K562 (cell line): ENCODE measurements at regions of chr15 and their contacts with region 1.

Region 1: GRCh38 chr15:65318870-65319356 is 14.4 kb downstream of the RNU5B-1 start:
- DNase-seq: peak; percentile 84 to 91 (median 88)
- ATAC-seq: peak; percentile 98
- H3K4me3 ChIP-seq: no peak overlapping the region
- H3K27ac ChIP-seq: no peak overlapping the region
- H3K4me1 ChIP-seq: peaks cover 0 to 4% of the 10 kb centered on the region in 2 experiments; a peak in 2 of 5 replicates
- H3K27me3 ChIP-seq: peaks cover 25 to 48% of the 10 kb centered on the region in 2 experiments
- CTCF ChIP-seq: peak; percentile 90 to 98 (median 98)
- EP300 ChIP-seq: no peak
- POLR2A ChIP-seq: no peak
- RAD21 ChIP-seq: peak; percentile 97 to 98

Region 2: GRCh38 chr15:64841258-64842095 is 477.4 kb before region 1 on chr15 and contains the start of gene PLEKHO2:
- CTCF ChIA-PET with region 1: no interaction called
- POLR2A ChIA-PET with region 1: no interaction called
- in situ Hi-C with region 1: no loop called
- intact Hi-C with region 1: no loop called
- DNase-seq: peak; percentile 95 to 97 (median 96)
- ATAC-seq: peak; percentile 91
- H3K4me3 ChIP-seq: peak within 1 kb of the TSS; percentile 83
- H3K27ac ChIP-seq: peak within 1 kb of the TSS; percentile 81
- H3K4me1 ChIP-seq: peaks cover 34 to 39% of the 10 kb centered on the region in 2 experiments
- H3K27me3 ChIP-seq: no peaks in the 10 kb centered on the region
- CTCF ChIP-seq: peak; percentile 16 to 39 (median 16); a peak in 3 of 6 replicates
- EP300 ChIP-seq: no peak
- POLR2A ChIP-seq: peak; percentile 79
- RAD21 ChIP-seq: no peak
- polyA plus RNA-seq, gene PLEKHO2: 0.24 to 0.53 TPM

Region 3: DNA sequence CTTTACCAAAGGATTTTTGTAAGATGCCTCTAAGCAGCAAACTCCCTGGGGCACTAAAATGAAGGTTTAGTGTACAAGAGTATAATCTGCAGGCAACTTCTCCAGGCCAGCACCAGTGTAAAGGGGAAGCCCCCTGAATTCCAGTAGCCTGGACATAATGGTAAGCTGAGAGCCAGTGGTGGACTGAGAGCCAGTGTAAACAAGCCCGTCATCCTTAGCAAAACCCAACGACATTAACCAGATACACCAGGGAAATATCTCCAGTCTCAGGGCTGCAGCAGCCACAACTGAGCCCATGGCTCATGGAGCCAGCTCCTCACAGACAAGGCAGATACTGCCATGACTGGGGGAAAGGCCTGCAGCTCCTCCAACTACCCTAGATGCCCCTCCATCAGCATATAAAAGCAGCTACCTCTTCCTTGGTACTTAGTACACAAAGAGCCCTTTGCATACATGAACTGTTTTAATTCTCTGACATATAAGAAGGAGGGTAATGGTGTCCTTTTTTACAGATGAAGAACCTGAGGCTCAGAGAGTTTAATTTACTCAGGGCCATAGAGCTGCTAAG is 54.0 kb before region 1 on chr15:
- CTCF ChIA-PET with region 1: no interaction called
- POLR2A ChIA-PET with region 1: no interaction called
- in situ Hi-C with region 1: no loop called
- intact Hi-C with region 1: no loop called
- DNase-seq: no peak
- ATAC-seq: no peak
- H3K4me3 ChIP-seq: no peak overlapping the region
- H3K27ac ChIP-seq: no peak overlapping the region
- H3K4me1 ChIP-seq: no peaks in the 10 kb centered on the region; a peak in 1 of 5 replicates
- H3K27me3 ChIP-seq: no peaks in the 10 kb centered on the region
- CTCF ChIP-seq: no peak
- EP300 ChIP-seq: no peak
- POLR2A ChIP-seq: no peak
- RAD21 ChIP-seq: no peak

Region 4: GRCh38 chr15:65384895-65385858 is 66.3 kb after region 1 on chr15:
- CTCF ChIA-PET with region 1: interaction called, 66 read pairs
- POLR2A ChIA-PET with region 1: interaction called, 3 read pairs
- in situ Hi-C with region 1: loop called (anchors 5 kb)
- intact Hi-C with region 1: loop called (anchors 1 kb)
- DNase-seq: peak; percentile 88 to 91 (median 90)
- ATAC-seq: peak; percentile 96
- H3K4me3 ChIP-seq: peak overlapping the region; percentile 20; the same call in 1 of the 2 replicates
- H3K27ac ChIP-seq: no peak overlapping the region
- H3K4me1 ChIP-seq: peaks cover 6 to 15% of the 10 kb centered on the region in 2 experiments; a peak in 4 of 5 replicates
- H3K27me3 ChIP-seq: peaks cover 48 to 66% of the 10 kb centered on the region in 2 experiments; a peak in 4 of 5 replicates
- CTCF ChIP-seq: peak; percentile 93 to 97 (median 96)
- EP300 ChIP-seq: no peak
- POLR2A ChIP-seq: no peak
- RAD21 ChIP-seq: peak; percentile 86 to 96

Region 5: GRCh38 chr15:65400760-65401610 is 82.1 kb after region 1 on chr15:
- CTCF ChIA-PET with region 1: interaction called, 16 read pairs
- POLR2A ChIA-PET with region 1: no interaction called
- in situ Hi-C with region 1: no loop called
- intact Hi-C with region 1: loop called (anchors 5 kb)
- DNase-seq: peak; percentile 78 to 90 (median 86)
- ATAC-seq: peak; percentile 96
- H3K4me3 ChIP-seq: no peak overlapping the region
- H3K27ac ChIP-seq: no peak overlapping the region
- H3K4me1 ChIP-seq: peaks cover 4 to 11% of the 10 kb centered on the region in 2 experiments; a peak in 3 of 5 replicates
- H3K27me3 ChIP-seq: peaks cover 19 to 50% of the 10 kb centered on the region in 2 experiments
- CTCF ChIP-seq: peak; percentile 77 to 85 (median 81)
- EP300 ChIP-seq: no peak
- POLR2A ChIP-seq: no peak
- RAD21 ChIP-seq: peak; percentile 60 to 80

Region 6: DNA sequence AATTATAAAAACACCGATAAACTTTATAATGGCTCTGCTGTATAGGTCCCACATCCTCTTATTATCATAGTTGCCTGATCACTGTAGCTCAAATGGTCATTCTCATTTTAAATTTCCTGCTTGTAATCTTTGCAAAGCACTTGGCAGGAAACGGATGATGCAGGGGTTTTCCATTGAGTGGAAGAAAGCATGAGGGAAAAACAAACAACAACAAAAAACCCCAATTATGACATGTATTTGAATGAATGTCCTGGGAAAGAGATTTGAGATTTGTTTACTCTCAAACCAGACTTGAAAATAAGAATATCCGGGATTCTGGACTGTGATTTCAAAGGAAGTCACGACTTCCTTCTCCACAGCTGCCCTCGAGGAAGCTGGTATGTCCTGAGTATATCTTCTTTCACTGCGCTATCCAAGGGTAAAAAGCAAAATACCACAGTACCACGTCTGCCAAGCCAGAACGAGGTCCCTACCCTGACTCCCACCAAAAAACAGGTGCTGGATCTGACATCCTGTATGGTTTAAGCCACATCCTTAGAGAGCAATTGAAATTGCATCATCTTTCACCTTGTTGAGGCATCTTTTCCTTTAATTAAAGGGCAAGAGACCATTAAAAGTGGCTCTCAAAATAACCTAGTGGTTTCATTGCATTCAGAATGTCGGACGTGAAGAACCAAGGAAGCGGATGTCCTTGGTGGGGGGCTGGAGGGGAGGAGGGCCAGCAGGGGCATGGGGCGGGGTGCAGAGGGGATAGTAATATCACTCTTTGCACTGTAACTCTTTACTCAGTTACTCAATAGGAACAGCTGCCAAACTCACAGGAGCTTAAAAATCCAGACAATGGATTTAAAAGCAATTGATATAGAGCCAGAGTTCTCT is 1051.1 kb after region 1 on chr15:
- CTCF ChIA-PET with region 1: no interaction called
- POLR2A ChIA-PET with region 1: no interaction called
- in situ Hi-C with region 1: no loop called
- intact Hi-C with region 1: no loop called
- DNase-seq: peak; percentile 16 to 27 (median 20)
- ATAC-seq: peak; percentile 85
- H3K4me3 ChIP-seq: no peak overlapping the region
- H3K27ac ChIP-seq: peak overlapping the region; percentile 57; the same call in 2 of the 3 replicates
- H3K4me1 ChIP-seq: peaks cover 0 to 12% of the 10 kb centered on the region in 2 experiments; a peak in 3 of 5 replicates
- H3K27me3 ChIP-seq: no peaks in the 10 kb centered on the region
- CTCF ChIP-seq: no peak
- EP300 ChIP-seq: 0 out of 2 replicates have a peak, but pooled peaks have one; percentile 40
- POLR2A ChIP-seq: no peak
- RAD21 ChIP-seq: no peak